ENCODE measurements at regions of chr2 and their contacts with region 1.

Region 1: GRCh38 chr2:134137182-134137611 is 116.7 kb upstream of the MGAT5 start:
- DNase-seq: peak; percentile 83
- H3K4me3 Mint-ChIP-seq: peak overlapping the region; percentile 48
- H3K27ac Mint-ChIP-seq: peak overlapping the region; percentile 89
- H3K4me1 Mint-ChIP-seq: peaks cover 77% of the 10 kb centered on the region
- H3K27me3 Mint-ChIP-seq: no peaks in the 10 kb centered on the region
- CTCF ChIP-seq: no peak

Region 2: DNA sequence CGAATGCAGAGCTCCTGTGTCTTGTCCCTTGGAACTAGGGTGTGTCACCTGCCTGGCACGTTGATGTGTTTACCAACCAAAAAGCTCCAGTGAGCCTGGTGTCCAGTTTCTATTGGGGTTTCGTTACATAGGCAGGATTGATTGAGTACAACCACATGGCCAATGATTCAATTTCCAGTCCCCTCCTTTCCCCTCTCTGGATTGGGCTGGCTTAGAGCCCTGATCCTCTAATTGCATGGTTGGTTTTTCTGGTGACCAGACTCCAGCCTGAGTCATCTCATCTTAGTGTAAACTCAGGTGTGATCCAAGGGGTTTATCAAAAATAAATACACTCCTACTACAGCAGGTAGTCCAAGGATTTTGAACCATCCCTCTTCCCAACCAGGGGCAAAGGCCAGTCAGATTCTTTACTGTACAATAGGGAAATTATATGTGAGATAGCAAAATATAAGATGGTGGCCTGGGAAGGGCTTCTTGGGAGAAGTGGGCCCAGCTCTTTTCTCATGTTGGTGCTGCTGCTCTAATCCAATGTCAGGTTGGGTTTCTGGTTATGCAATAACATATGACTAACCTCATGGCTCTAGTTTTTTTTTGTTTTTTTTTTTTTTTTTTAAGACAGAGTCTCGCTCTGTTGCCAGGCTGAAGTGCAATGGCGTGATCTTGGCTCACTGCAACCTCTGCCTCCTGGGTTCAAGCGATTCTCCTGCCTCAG is 52.0 kb after region 1 on chr2:
- CTCF ChIA-PET with region 1: no interaction called
- intact Hi-C with region 1: loop called (anchors 2 kb)
- DNase-seq: peak; percentile 73
- H3K4me3 Mint-ChIP-seq: peak overlapping the region; percentile 32
- H3K27ac Mint-ChIP-seq: peak overlapping the region; percentile 94
- H3K4me1 Mint-ChIP-seq: peaks cover 57% of the 10 kb centered on the region
- H3K27me3 Mint-ChIP-seq: no peaks in the 10 kb centered on the region
- CTCF ChIP-seq: no peak

Region 3: GRCh38 chr2:134232868-134233727 is 95.9 kb after region 1 on chr2:
- CTCF ChIA-PET with region 1: no interaction called
- intact Hi-C with region 1: loop called (anchors 1 kb)
- DNase-seq: no peak
- H3K4me3 Mint-ChIP-seq: peak overlapping the region; percentile 42
- H3K27ac Mint-ChIP-seq: peak overlapping the region; percentile 97
- H3K4me1 Mint-ChIP-seq: peaks cover 71% of the 10 kb centered on the region
- H3K27me3 Mint-ChIP-seq: no peaks in the 10 kb centered on the region
- CTCF ChIP-seq: no peak